ENCODE measurements at regions of chr2 and their contacts with region 1.

Region 1: GRCh38 chr2:60488291-60488690 is 65.2 kb downstream of the BCL11A start:
- DNase-seq: no peak

Region 2: DNA sequence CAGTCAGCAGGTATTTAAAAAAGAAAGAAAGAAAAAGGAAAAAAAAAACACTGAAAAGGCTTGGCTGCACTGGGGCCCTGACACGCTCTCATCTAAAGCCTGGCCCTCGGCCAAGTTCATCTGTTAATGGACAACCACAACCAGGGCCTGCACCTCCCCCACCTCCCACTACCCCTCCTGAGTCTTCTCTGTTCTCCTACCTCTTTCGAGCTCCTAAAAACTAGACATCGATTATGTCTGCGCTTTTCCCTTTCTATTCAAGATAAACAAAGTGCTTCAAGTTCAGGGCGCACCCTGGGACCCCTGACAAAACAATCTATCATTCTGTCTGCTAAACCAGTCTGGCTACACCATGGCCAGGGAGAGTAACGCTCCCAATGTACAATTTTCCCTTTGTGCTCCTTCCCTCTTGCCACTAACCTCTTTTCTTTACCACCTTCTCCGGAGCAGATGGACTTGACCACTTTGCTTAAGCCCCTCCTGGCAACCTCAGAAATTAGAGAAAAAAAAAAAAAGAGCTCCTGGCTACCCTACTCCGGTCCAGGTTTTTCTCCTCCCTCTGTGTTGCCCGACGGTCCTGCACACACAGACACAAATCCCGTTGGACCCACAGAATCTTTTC is 42.5 kb after region 1 on chr2:
- intact Hi-C with region 1: loop called (anchors 5 kb)
- DNase-seq: no peak

Measured in cardiac septum (tissue), 1 donor.